ENCODE measurements at regions of chr13 and their contacts with region 1.

Region 1: GRCh38 chr13:33542283-33543088 is 256.9 kb upstream of the STARD13 start:
- DNase-seq: peak; percentile 99
- ATAC-seq: peak; percentile 97

Region 2: GRCh38 chr13:32586080-32586900 is 956.2 kb before region 1 on chr13 and contains the start of gene PDS5B:
- intact Hi-C with region 1: loop called (anchors 1 kb)
- DNase-seq: peak; percentile 98
- ATAC-seq: peak; percentile 99
- total RNA-seq, gene PDS5B: 25.1 TPM

Region 3: GRCh38 chr13:33110713-33111413 is 431.6 kb before region 1 on chr13:
- intact Hi-C with region 1: loop called (anchors 5 kb)
- DNase-seq: peak; percentile 88
- ATAC-seq: peak; percentile 55

Region 4: DNA sequence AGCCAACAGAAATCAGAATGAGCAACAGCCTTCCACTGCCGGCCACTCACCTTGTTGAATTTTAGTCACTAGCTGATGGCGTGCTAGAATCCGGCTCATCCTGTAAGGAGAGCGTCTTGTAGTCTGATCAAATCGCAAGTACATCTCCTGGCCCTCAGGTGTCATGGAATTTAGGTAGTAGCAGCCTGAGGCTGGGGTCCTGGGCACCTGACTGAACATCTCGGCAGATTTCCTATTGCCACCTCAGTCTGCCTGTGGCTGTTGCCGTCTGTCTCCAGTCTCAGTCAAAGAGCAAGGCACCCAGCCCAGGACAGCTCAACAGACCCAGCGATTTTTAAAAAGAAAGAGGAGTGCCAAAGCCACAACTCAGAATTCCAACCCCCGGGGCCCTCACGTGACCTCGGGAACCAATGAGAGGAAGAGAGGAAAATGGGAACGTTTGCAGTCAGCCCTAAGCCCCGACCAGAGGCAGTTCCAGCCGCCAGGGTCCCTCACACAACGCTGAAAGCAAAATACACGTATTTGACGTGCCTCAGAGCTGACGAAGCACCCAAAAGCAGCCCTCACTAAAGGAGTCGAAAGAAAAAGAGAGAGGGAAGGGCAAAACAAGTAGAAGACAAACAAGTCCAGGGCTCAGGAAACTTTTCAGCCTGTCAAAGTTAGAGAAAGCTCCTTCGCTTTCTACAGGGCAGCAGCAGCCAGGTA is 256.9 kb before region 1 on chr13 and contains the start of gene STARD13:
- intact Hi-C with region 1: loop called (anchors 2 kb)
- DNase-seq: peak; percentile 94
- ATAC-seq: peak; percentile 96
- total RNA-seq, gene STARD13: 36.4 TPM

Region 5: DNA sequence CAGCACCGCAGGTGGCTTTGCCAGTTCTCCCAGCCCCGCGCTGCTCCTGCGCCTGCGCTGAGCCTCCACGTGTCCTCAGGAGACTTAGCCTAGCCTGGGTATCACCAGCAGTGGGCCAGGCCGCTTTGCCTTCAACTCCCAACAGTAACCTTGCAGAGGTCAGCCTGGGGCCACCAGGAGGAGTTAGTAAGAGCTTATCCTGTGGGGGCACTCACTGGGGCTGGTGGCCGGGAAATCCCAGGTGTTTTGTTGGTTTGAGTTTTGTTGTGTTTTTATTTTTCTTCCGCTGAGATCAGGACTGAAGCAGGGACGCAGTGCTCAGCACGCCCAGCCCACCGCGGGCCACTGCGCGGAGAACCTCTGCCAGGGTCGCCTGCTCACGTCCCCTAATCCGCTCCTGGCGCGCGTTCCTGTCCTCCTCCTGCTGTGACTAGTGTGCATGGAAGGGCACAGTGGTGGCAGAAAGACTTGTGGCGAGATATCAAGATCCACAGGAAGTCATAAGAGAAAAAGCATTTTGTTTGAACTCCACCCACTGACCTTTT is 68.1 kb after region 1 on chr13:
- intact Hi-C with region 1: loop called (anchors 2 kb)
- DNase-seq: peak; percentile 86
- ATAC-seq: peak; percentile 88

Region 6: DNA sequence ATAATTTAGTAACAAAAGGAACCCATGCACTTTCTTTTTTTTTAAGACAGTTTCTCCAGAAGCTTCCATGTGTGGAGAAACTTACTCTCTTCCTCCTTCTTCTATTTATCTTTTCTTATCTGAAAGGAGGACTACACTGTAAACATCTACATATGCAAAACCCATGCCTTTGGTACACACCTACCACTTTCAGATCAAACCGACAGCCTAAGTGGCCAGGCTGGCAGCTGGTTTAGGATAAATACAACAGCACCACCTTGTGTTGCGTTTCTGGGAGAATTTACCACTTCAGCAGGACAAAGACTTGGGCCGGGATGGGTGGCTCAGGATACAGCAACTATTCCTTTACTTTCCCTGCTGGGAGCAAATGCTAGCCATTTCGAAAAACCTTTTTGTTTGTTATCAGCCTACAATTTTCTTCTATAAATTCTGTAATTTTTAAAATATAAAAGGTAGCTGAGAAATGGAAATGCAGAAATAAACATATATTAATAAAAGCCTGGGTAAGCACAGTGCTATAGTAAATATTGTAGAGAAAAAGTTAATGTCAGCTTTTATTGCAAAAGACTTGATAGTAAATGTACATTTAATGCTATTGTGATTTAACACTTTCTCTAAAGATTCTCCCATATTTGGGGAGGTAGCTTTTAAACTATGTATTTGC is 181.4 kb after region 1 on chr13:
- intact Hi-C with region 1: loop called (anchors 1 kb)
- DNase-seq: peak; percentile 84
- ATAC-seq: peak; percentile 85

Measured in Right ventricle myocardium inferior (tissue), 1 donor.